ENCODE measurements at regions of chr19 and their contacts with region 1.

Region 1: DNA sequence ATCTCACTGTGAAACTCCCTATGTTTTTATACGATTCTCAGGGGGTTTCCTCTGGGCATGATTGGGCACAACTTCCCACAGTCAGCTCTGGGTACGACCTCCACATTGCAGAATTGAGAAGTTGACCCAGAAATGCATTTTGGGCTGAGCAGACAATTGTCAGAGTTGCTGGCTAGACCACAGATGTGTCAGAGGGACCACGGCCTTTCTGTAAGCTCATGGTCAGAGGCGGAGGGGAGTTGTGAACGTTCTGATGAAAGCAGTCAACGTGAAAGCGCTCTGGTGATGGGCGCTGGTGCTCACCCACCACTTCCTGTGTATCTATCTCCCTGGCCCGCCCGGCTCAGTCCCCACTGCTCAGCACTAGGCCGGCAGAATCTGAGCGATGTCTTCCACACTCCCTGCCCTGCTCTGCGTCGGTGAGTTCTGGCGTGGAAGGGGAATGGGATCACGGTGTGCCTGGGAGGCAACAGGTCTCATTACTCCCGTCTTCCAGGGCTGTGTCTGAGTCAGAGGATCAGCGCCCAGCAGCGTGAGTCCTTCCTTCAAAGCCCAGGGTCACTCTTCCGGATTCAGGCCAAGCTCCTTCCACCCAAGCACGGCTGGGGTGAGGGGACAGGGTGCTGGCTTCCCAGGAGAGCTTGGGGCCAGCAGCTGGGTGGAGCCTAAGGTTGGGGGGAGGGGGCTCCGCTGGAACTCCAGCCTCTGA is at the start of gene NCR1:
- DNase-seq: peak; percentile 58 to 76
- ATAC-seq: peak; percentile 81 to 92 (median 90)
- H3K4me3 ChIP-seq: peak within 1 kb of the TSS; percentile 80
- H3K4me3 Mint-ChIP-seq: peak within 1 kb of the TSS; percentile 92
- H3K27ac ChIP-seq: peak within 1 kb of the TSS; percentile 94
- H3K27ac Mint-ChIP-seq: peak within 1 kb of the TSS; percentile 94 to 98
- H3K4me1 ChIP-seq: peaks cover 59% of the 10 kb centered on the region
- H3K4me1 Mint-ChIP-seq: peaks cover 51 to 57% of the 10 kb centered on the region in 2 donors
- H3K27me3 ChIP-seq: no peaks in the 10 kb centered on the region
- H3K27me3 Mint-ChIP-seq: no peaks in the 10 kb centered on the region
- CTCF ChIP-seq: no peak
- total RNA-seq, gene NCR1: 213 to 342 (median 244) TPM

Region 2: GRCh38 chr19:54532528-54532927 is 373.4 kb before region 1 on chr19:
- intact Hi-C with region 1: loop called (anchors 10 kb)
- DNase-seq: peak; percentile 54 to 62
- ATAC-seq: peak; percentile 84 to 92 (median 91)
- H3K4me3 ChIP-seq: peak overlapping the region; percentile 51
- H3K4me3 Mint-ChIP-seq: peak overlapping the region; percentile 90
- H3K27ac ChIP-seq: peak overlapping the region; percentile 88
- H3K27ac Mint-ChIP-seq: peak overlapping the region; percentile 88 to 90
- H3K4me1 ChIP-seq: peaks cover 47% of the 10 kb centered on the region
- H3K4me1 Mint-ChIP-seq: peaks cover 78 to 92% of the 10 kb centered on the region in 2 donors
- H3K27me3 ChIP-seq: peaks cover 6% of the 10 kb centered on the region
- H3K27me3 Mint-ChIP-seq: peaks cover 5 to 12% of the 10 kb centered on the region in 2 donors
- CTCF ChIP-seq: no peak

Region 3: DNA sequence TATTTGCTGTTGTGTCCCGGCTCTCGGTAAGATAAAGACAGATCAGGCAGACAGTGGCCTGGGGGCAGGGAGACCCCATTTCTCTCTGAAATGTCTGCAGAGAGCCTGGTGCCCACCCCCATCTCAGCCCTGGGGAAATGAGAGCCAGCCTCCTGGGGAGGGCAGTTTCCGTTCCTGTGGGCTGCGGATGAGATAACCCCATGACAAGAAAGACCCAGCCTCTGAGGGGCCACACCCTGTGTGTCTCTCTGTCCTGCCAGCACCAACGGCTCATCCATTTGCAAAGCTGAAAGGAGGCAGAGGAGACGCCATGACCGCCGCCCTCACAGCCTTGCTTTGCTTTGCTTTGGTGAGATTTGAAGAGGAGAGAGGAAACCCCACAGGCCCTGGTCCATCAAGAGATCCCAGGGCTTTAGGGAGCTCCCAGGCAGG is 209.8 kb before region 1 on chr19:
- intact Hi-C with region 1: loop called (anchors 10 kb)
- DNase-seq: no peak
- ATAC-seq: no peak
- H3K4me3 ChIP-seq: no peak overlapping the region
- H3K4me3 Mint-ChIP-seq: peak overlapping the region; percentile 40
- H3K27ac ChIP-seq: no peak overlapping the region
- H3K27ac Mint-ChIP-seq: peak overlapping the region in 1 of 2 donors; percentile 78
- H3K4me1 ChIP-seq: peaks cover 34% of the 10 kb centered on the region
- H3K4me1 Mint-ChIP-seq: peaks cover 37 to 45% of the 10 kb centered on the region in 2 donors
- H3K27me3 ChIP-seq: peaks cover 4% of the 10 kb centered on the region
- H3K27me3 Mint-ChIP-seq: peaks cover 39 to 42% of the 10 kb centered on the region in 2 donors
- CTCF ChIP-seq: no peak

Region 4: DNA sequence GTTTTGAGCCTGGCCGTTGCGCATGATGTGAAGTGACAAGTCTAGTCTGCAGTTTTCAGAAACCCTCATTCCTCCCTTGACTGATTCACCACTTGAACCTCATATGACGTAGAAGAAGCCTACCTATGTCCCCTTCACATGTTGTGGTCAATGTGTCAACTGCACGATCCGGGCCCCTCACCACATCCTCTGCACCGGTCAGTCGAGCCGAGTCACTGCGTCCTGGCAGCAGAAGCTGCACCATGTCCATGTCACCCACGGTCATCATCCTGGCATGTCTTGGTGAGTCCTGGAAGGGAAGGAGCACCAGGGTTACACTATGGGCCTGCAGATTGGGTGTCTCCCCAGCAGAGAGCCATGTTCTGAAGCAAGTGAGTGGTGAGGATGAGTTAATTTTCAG is 102.5 kb before region 1 on chr19 and contains the start of gene KIR2DL4:
- intact Hi-C with region 1: loop called (anchors 5 kb)
- DNase-seq: peak; percentile 53 to 76
- ATAC-seq: peak; percentile 73 to 85 (median 85)
- H3K4me3 ChIP-seq: peak within 1 kb of the TSS; percentile 16
- H3K4me3 Mint-ChIP-seq: peak within 1 kb of the TSS; percentile 80
- H3K27ac ChIP-seq: peak within 1 kb of the TSS; percentile 55
- H3K27ac Mint-ChIP-seq: peak within 1 kb of the TSS; percentile 84 to 86
- H3K4me1 ChIP-seq: peaks cover 45% of the 10 kb centered on the region
- H3K4me1 Mint-ChIP-seq: peaks cover 53 to 57% of the 10 kb centered on the region in 2 donors
- H3K27me3 ChIP-seq: no peaks in the 10 kb centered on the region
- H3K27me3 Mint-ChIP-seq: peaks cover 0 to 4% of the 10 kb centered on the region in 2 donors
- CTCF ChIP-seq: no peak
- total RNA-seq, gene KIR2DL4: 7.1 to 14.5 (median 7.3) TPM

Region 5: GRCh38 chr19:54916822-54917221 is 10.9 kb after region 1 on chr19:
- intact Hi-C with region 1: loop called (anchors 1 kb)
- DNase-seq: peak; percentile 24 to 38
- ATAC-seq: peak; percentile 58 to 78 (median 68)
- H3K4me3 ChIP-seq: no peak overlapping the region
- H3K4me3 Mint-ChIP-seq: peak overlapping the region; percentile 89
- H3K27ac ChIP-seq: peak overlapping the region; percentile 61
- H3K27ac Mint-ChIP-seq: peak overlapping the region; percentile 83 to 87
- H3K4me1 ChIP-seq: peaks cover 65% of the 10 kb centered on the region
- H3K4me1 Mint-ChIP-seq: peaks cover 48 to 70% of the 10 kb centered on the region in 2 donors
- H3K27me3 ChIP-seq: no peaks in the 10 kb centered on the region
- H3K27me3 Mint-ChIP-seq: no peaks in the 10 kb centered on the region
- CTCF ChIP-seq: no peak

Region 6: DNA sequence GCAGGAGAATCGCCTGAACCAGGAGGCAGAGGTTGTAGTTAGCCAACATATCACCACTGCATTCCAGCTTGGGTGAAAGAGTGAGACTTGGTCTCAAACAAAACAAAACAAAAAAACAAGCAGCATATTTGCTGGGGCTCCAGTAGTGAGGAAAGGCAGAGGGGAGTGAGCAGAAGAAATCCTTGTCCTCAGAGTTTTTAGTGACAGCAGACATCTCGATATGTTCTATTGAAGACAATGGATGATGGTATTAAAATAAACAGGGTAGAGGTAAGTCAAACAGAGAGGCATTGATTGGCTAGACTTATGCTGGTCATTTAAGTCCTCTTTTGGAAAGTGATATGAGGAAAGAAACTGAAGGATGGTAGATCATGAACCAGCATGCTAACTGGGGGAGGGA is 22.3 kb after region 1 on chr19:
- intact Hi-C with region 1: no loop called
- DNase-seq: no peak
- ATAC-seq: no peak
- H3K4me3 ChIP-seq: no peak overlapping the region
- H3K4me3 Mint-ChIP-seq: no peak overlapping the region
- H3K27ac ChIP-seq: no peak overlapping the region
- H3K27ac Mint-ChIP-seq: no peak overlapping the region
- H3K4me1 ChIP-seq: no peaks in the 10 kb centered on the region
- H3K4me1 Mint-ChIP-seq: peaks cover 0 to 9% of the 10 kb centered on the region in 2 donors
- H3K27me3 ChIP-seq: no peaks in the 10 kb centered on the region
- H3K27me3 Mint-ChIP-seq: no peaks in the 10 kb centered on the region
- CTCF ChIP-seq: no peak

Measured in natural killer cell (primary cell).